ENCODE measurements at regions of chr12 and their contacts with region 1.

Region 1: DNA sequence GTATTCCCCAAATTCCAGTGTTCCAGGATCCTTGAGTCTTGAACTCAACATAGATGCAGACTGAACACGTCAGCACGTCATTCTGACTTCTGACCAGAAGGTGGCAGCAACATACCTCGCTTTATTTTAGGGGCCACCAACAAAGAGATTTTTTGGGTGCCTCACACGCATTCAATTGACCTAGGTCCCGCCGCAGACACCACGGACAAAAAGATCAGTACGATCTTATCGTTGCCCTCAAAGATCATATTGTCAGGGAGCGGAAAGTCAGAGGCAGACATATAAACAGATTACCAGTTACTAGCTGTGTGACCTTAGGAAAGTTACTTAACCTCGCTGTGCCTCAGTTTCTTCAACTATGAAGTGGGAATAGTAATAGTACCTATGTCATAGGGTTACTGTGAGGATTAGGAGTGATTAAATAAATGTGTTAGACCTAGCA is 6.5 kb upstream of the PRPH start:
- DNase-seq: peak; percentile 83
- ATAC-seq: peak; percentile 53
- H3K4me3 ChIP-seq: no peak overlapping the region
- H3K4me3 Mint-ChIP-seq: no peak overlapping the region
- H3K27ac ChIP-seq: no peak overlapping the region
- H3K27ac Mint-ChIP-seq: no peak overlapping the region
- H3K4me1 ChIP-seq: no peaks in the 10 kb centered on the region
- H3K4me1 Mint-ChIP-seq: no peaks in the 10 kb centered on the region
- H3K27me3 ChIP-seq: peaks cover 0 to 33% (median 5%) of the 10 kb centered on the region in 4 experiments
- H3K27me3 Mint-ChIP-seq: peaks cover 28% of the 10 kb centered on the region
- CTCF ChIP-seq: peak; percentile 95

Region 2: DNA sequence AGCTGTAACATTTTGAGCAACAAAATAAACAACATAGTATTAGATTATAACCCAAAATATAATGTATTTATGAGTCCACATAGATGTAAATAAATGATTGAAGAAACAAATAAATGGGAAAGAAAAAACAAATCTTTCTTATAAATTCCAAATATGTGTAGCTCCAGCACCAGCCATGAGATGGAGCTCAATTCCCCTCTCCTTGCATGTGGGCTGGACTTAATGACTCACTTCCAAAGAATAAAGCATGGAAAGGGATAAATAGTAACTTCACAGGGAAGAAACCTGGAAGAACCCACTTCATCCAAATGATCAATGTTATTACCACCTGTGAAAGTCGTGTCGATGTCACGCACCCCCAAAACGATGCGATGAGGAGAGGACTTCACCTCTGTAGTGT is 1741.3 kb before region 1 on chr12:
- CTCF ChIA-PET with region 1: no interaction called
- POLR2A ChIA-PET with region 1: no interaction called
- intact Hi-C with region 1: no loop called
- DNase-seq: no peak
- ATAC-seq: no peak
- H3K4me3 ChIP-seq: no peak overlapping the region
- H3K4me3 Mint-ChIP-seq: no peak overlapping the region
- H3K27ac ChIP-seq: no peak overlapping the region
- H3K27ac Mint-ChIP-seq: no peak overlapping the region
- H3K4me1 ChIP-seq: peaks cover 0 to 5% of the 10 kb centered on the region in 2 donors
- H3K4me1 Mint-ChIP-seq: peaks cover 7% of the 10 kb centered on the region
- H3K27me3 ChIP-seq: peaks cover 0 to 2% (median 0%) of the 10 kb centered on the region in 4 experiments
- H3K27me3 Mint-ChIP-seq: peaks cover 4% of the 10 kb centered on the region
- CTCF ChIP-seq: no peak

Region 3: DNA sequence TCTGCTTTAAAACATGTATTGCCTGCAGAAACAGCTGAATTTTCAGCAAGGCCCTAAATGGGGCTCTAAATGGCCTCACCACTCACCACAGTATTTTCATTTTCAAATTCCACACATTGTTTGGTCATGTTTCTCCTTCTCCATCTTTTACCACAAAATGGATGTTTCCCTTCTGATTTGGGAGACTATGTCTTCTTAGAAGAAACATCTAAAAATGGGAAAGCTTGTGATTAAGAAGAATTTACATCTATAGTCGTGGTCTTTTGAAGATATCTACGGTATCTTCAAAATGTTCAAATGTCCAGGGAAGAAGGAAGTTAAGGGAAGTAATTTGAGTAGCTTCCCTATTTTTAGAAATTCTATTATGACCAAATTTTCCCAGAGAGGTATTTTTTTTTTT is 44.3 kb before region 1 on chr12:
- CTCF ChIA-PET with region 1: no interaction called
- POLR2A ChIA-PET with region 1: no interaction called
- intact Hi-C with region 1: no loop called
- DNase-seq: no peak
- ATAC-seq: no peak
- H3K4me3 ChIP-seq: no peak overlapping the region
- H3K4me3 Mint-ChIP-seq: no peak overlapping the region
- H3K27ac ChIP-seq: no peak overlapping the region
- H3K27ac Mint-ChIP-seq: no peak overlapping the region
- H3K4me1 ChIP-seq: no peaks in the 10 kb centered on the region
- H3K4me1 Mint-ChIP-seq: no peaks in the 10 kb centered on the region
- H3K27me3 ChIP-seq: peaks cover 0 to 2% (median 0%) of the 10 kb centered on the region in 4 experiments
- H3K27me3 Mint-ChIP-seq: no peaks in the 10 kb centered on the region
- CTCF ChIP-seq: no peak

Region 4: GRCh38 chr12:49264738-49265515 is 23.5 kb before region 1 on chr12 and contains the start of gene TUBA1C:
- CTCF ChIA-PET with region 1: interaction called, 14 read pairs
- POLR2A ChIA-PET with region 1: no interaction called
- intact Hi-C with region 1: no loop called
- DNase-seq: peak; percentile 92
- ATAC-seq: peak; percentile 93
- H3K4me3 ChIP-seq: peak within 1 kb of the TSS; percentile 42 to 98 (median 83)
- H3K4me3 Mint-ChIP-seq: peak within 1 kb of the TSS; percentile 97
- H3K27ac ChIP-seq: peak within 1 kb of the TSS; percentile 80 to 82
- H3K27ac Mint-ChIP-seq: peak within 1 kb of the TSS; percentile 94
- H3K4me1 ChIP-seq: peaks cover 4 to 12% of the 10 kb centered on the region in 2 donors
- H3K4me1 Mint-ChIP-seq: peaks cover 20% of the 10 kb centered on the region
- H3K27me3 ChIP-seq: no peaks in the 10 kb centered on the region
- H3K27me3 Mint-ChIP-seq: no peaks in the 10 kb centered on the region
- CTCF ChIP-seq: no peak
- total RNA-seq, gene TUBA1C: 34.9 and 35.2 TPM in 2 replicates

Region 5: GRCh38 chr12:49322708-49323523 is 34.5 kb after region 1 on chr12 and contains the start of gene TROAP:
- CTCF ChIA-PET with region 1: interaction called, 12 read pairs
- POLR2A ChIA-PET with region 1: no interaction called
- intact Hi-C with region 1: no loop called
- DNase-seq: peak; percentile 98
- ATAC-seq: peak; percentile 99
- H3K4me3 ChIP-seq: peak within 1 kb of the TSS; percentile 66 to 85 (median 70)
- H3K4me3 Mint-ChIP-seq: peak within 1 kb of the TSS; percentile 99
- H3K27ac ChIP-seq: peak within 1 kb of the TSS; percentile 40 to 74
- H3K27ac Mint-ChIP-seq: peak within 1 kb of the TSS; percentile 85
- H3K4me1 ChIP-seq: peaks cover 12 to 18% of the 10 kb centered on the region in 2 donors
- H3K4me1 Mint-ChIP-seq: peaks cover 23% of the 10 kb centered on the region
- H3K27me3 ChIP-seq: no peaks in the 10 kb centered on the region
- H3K27me3 Mint-ChIP-seq: no peaks in the 10 kb centered on the region
- CTCF ChIP-seq: no peak
- total RNA-seq, gene TROAP: 1.0 and 1.7 TPM in 2 replicates

Region 6: GRCh38 chr12:49336645-49337584 is 48.5 kb after region 1 on chr12 and contains the start of gene C1QL4:
- CTCF ChIA-PET with region 1: interaction called, 74 read pairs
- POLR2A ChIA-PET with region 1: no interaction called
- intact Hi-C with region 1: loop called (anchors 1 kb)
- DNase-seq: peak; percentile 91
- ATAC-seq: peak; percentile 98
- H3K4me3 ChIP-seq: peak within 1 kb of the TSS in 4 of 5 experiments; percentile 21 to 50 (median 46)
- H3K4me3 Mint-ChIP-seq: peak within 1 kb of the TSS; percentile 80
- H3K27ac ChIP-seq: no peak within 1 kb of the TSS
- H3K27ac Mint-ChIP-seq: peak within 1 kb of the TSS; percentile 61
- H3K4me1 ChIP-seq: peaks cover 38 to 39% of the 10 kb centered on the region in 2 donors
- H3K4me1 Mint-ChIP-seq: peaks cover 38% of the 10 kb centered on the region
- H3K27me3 ChIP-seq: peaks cover 0 to 86% (median 49%) of the 10 kb centered on the region in 4 experiments
- H3K27me3 Mint-ChIP-seq: peaks cover 66% of the 10 kb centered on the region
- CTCF ChIP-seq: peak; percentile 99
- total RNA-seq, gene C1QL4: not detected in 2 replicates

Region 7: GRCh38 chr12:49347384-49348237 is 59.2 kb after region 1 on chr12:
- CTCF ChIA-PET with region 1: interaction called, 139 read pairs
- POLR2A ChIA-PET with region 1: no interaction called
- intact Hi-C with region 1: loop called (anchors 1 kb)
- DNase-seq: peak; percentile 83
- ATAC-seq: peak; percentile 69
- H3K4me3 ChIP-seq: peak overlapping the region; percentile 11 to 61 (median 39)
- H3K4me3 Mint-ChIP-seq: peak overlapping the region; percentile 90
- H3K27ac ChIP-seq: no peak overlapping the region
- H3K27ac Mint-ChIP-seq: no peak overlapping the region
- H3K4me1 ChIP-seq: peaks cover 56 to 60% of the 10 kb centered on the region in 2 donors
- H3K4me1 Mint-ChIP-seq: peaks cover 51% of the 10 kb centered on the region
- H3K27me3 ChIP-seq: peaks cover 0 to 82% (median 61%) of the 10 kb centered on the region in 4 experiments
- H3K27me3 Mint-ChIP-seq: peaks cover 53% of the 10 kb centered on the region
- CTCF ChIP-seq: peak; percentile 99

Region 8: GRCh38 chr12:49580572-49581535 is 292.4 kb after region 1 on chr12:
- CTCF ChIA-PET with region 1: interaction called, 14 read pairs
- POLR2A ChIA-PET with region 1: no interaction called
- intact Hi-C with region 1: loop called (anchors 5 kb)
- DNase-seq: peak; percentile 60
- ATAC-seq: peak; percentile 61
- H3K4me3 ChIP-seq: no peak overlapping the region
- H3K4me3 Mint-ChIP-seq: no peak overlapping the region
- H3K27ac ChIP-seq: no peak overlapping the region
- H3K27ac Mint-ChIP-seq: no peak overlapping the region
- H3K4me1 ChIP-seq: no peaks in the 10 kb centered on the region
- H3K4me1 Mint-ChIP-seq: peaks cover 5% of the 10 kb centered on the region
- H3K27me3 ChIP-seq: no peaks in the 10 kb centered on the region
- H3K27me3 Mint-ChIP-seq: no peaks in the 10 kb centered on the region
- CTCF ChIP-seq: peak; percentile 70

Region 9: DNA sequence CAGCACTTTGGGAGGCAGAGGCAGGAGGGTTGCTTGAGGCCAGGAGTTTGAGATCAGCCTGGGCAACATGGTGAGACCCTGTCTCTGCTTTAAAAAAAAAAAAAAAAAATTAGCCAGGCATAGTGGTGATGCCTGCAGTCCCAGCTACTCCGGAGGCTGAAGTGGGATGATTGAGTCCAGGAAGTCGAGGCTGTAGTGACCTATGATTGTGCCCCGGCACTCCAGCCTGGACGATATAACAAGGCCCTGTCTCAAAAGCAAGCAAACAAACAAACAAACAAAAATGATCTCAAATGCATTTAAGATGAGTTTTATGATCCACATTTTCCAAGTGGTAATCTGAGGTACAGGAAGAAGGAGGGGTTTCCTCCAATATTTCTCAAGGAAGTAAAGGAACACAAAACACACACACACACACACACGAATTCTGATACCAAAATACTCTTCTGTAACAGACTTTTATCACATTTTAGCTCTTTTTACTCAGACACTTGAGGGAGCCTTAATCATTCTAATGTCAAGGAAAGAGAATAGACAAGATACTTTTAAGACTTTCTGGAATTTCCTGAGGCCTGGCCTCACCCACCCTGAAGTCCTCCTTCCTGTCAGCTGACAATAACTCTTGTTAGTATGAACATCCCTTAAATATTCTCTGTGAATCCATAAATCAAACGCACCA is 923.1 kb after region 1 on chr12:
- CTCF ChIA-PET with region 1: no interaction called
- POLR2A ChIA-PET with region 1: no interaction called
- intact Hi-C with region 1: no loop called
- DNase-seq: no peak
- ATAC-seq: no peak
- H3K4me3 ChIP-seq: no peak overlapping the region
- H3K4me3 Mint-ChIP-seq: no peak overlapping the region
- H3K27ac ChIP-seq: no peak overlapping the region
- H3K27ac Mint-ChIP-seq: no peak overlapping the region
- H3K4me1 ChIP-seq: no peaks in the 10 kb centered on the region
- H3K4me1 Mint-ChIP-seq: peaks cover 4% of the 10 kb centered on the region
- H3K27me3 ChIP-seq: no peaks in the 10 kb centered on the region
- H3K27me3 Mint-ChIP-seq: no peaks in the 10 kb centered on the region
- CTCF ChIP-seq: no peak